Activated CD4-positive, alpha-beta memory T cell treated with anti-CD3 and anti-CD28 coated beads for 36 hours (primary cell): ENCODE measurements at regions of chrX and their contacts with region 1.

Region 1: GRCh38 chrX:52261463-52262194 is 76.9 kb downstream of the MAGED4 start:
- DNase-seq: peak; percentile 90
- H3K4me3 Mint-ChIP-seq: peak overlapping the region; percentile 93
- H3K27ac Mint-ChIP-seq: peak overlapping the region; percentile 99
- H3K4me1 Mint-ChIP-seq: peaks cover 13% of the 10 kb centered on the region
- H3K27me3 Mint-ChIP-seq: peaks cover 6% of the 10 kb centered on the region

Region 2: GRCh38 chrX:51614353-51615012 is 647.1 kb before region 1 on chrX:
- CTCF ChIA-PET with region 1: interaction called, 5 read pairs
- POLR2A ChIA-PET with region 1: no interaction called
- intact Hi-C with region 1: loop called (anchors 10 kb)
- DNase-seq: no peak
- H3K4me3 Mint-ChIP-seq: no peak overlapping the region
- H3K27ac Mint-ChIP-seq: no peak overlapping the region
- H3K4me1 Mint-ChIP-seq: peaks cover 5% of the 10 kb centered on the region
- H3K27me3 Mint-ChIP-seq: peaks cover 32% of the 10 kb centered on the region

Region 3: DNA sequence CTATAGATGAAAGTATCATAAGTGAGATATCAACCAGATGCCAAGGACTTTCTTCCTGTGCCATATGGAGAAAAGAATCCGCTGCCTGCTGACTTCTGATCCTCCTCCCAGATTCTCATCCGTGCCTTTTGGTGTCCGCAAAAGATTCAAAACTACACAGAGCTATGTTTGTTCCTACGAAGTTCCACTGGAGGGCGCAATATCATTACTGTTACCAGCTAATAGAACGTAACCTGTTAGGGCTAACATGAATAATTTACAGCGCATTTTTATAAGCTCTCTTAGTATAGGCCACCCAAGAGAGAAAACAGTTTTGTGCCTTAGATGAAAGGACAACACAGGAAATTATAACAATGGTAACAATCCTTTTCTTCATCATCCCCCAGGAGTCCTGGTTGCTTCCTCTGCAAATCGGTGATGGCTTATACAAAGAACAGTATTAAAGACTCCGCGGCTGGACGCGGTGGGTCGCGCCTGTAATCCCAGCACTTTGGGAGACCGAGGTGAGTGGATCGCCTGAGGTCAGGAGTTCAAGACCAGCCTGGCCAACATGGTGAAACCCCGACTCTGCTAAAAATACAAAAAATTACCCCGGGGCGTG is 620.1 kb before region 1 on chrX:
- CTCF ChIA-PET with region 1: interaction called, 4 read pairs
- POLR2A ChIA-PET with region 1: no interaction called
- intact Hi-C with region 1: loop called (anchors 2 kb)
- DNase-seq: peak; percentile 8
- H3K4me3 Mint-ChIP-seq: no peak overlapping the region
- H3K27ac Mint-ChIP-seq: no peak overlapping the region
- H3K4me1 Mint-ChIP-seq: no peaks in the 10 kb centered on the region
- H3K27me3 Mint-ChIP-seq: peaks cover 8% of the 10 kb centered on the region

Region 4: GRCh38 chrX:51892921-51893745 is 368.5 kb before region 1 on chrX and contains the start of gene MAGED1:
- CTCF ChIA-PET with region 1: no interaction called
- POLR2A ChIA-PET with region 1: no interaction called
- intact Hi-C with region 1: loop called (anchors 5 kb)
- DNase-seq: peak; percentile 89
- H3K4me3 Mint-ChIP-seq: peak within 1 kb of the TSS; percentile 91
- H3K27ac Mint-ChIP-seq: peak within 1 kb of the TSS; percentile 77
- H3K4me1 Mint-ChIP-seq: peaks cover 7% of the 10 kb centered on the region
- H3K27me3 Mint-ChIP-seq: no peaks in the 10 kb centered on the region
- total RNA-seq, gene MAGED1: 42.7 to 43.1 TPM

Region 5: DNA sequence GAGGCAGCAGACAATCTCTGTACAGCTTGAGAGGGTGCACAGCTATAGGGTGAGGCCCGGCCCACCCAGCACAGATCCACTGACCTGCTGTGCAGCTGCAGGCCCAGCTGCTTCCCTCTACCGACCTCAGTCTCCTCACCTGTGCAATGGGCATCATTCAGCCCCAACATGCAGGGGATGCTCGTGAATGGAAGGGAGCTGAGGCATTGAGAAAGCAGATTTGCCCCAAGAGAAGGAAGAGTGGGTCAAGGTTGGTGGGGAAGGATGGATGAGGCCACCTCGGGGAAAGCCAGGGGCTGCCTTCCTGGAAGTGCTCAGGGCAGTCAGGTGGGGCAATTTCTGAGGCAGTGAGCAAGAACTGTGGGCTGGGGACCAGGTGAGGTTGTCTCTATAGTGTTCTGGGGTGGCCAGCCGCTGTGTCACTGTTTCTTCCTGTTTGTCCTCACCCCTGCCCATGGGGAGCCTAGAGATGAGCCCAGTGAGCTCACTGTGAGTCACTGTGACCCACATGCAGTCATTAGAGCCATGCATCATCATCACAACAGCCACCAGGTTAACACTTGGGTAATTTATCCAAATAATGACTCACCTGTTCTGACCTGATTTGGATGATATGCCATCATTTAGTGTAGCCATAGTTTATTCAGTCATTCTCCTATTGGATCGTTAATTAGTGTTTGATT is 85.0 kb after region 1 on chrX:
- CTCF ChIA-PET with region 1: no interaction called
- POLR2A ChIA-PET with region 1: no interaction called
- intact Hi-C with region 1: no loop called
- DNase-seq: peak; percentile 57
- H3K4me3 Mint-ChIP-seq: no peak overlapping the region
- H3K27ac Mint-ChIP-seq: no peak overlapping the region
- H3K4me1 Mint-ChIP-seq: no peaks in the 10 kb centered on the region
- H3K27me3 Mint-ChIP-seq: no peaks in the 10 kb centered on the region

Region 6: DNA sequence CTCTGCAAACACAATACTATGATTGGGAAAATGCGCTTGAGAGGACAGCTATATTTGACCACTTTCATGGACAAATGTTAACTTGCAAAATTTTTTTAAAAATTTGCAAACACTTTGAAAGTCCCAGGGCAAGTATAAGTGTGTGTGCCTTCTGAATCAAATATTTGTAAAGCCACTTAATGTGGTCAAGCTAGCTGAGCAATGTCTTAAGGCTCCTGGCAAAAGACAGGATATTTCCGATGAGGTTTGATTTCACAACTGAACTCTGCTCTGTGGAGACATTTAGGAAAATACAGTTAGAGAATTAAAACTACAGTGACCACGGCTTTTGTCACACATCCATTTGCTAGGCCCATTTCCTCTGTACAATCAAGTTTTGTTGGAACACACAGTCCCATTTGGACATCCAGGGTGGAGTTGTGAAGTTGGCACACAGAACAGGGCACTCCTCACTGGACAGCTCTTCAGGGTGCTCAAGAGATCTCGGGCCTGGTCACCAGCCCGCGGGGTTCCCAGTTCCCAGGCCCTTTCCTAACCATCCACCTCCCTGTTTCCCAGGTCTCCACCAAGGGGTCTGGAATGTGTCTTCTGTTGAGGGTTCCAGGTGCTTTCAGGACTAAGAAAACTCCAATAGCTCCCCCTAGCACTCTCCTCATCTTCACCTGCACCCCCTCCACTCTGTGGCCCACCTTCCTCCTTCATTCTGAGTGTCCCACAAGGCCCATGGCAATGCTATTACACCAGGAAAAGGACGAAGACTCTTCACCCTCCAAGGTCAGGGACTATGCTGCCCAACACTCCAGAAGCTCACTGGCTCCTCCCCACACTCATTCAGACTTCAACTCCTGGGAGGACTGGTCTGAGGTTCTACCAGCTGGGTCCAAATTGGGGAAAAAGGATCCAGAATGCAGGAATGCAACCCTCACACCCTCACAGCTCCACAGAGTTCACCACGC is 149.1 kb after region 1 on chrX:
- CTCF ChIA-PET with region 1: no interaction called
- POLR2A ChIA-PET with region 1: no interaction called
- intact Hi-C with region 1: no loop called
- DNase-seq: no peak
- H3K4me3 Mint-ChIP-seq: no peak overlapping the region
- H3K27ac Mint-ChIP-seq: no peak overlapping the region
- H3K4me1 Mint-ChIP-seq: no peaks in the 10 kb centered on the region
- H3K27me3 Mint-ChIP-seq: no peaks in the 10 kb centered on the region

Region 7: DNA sequence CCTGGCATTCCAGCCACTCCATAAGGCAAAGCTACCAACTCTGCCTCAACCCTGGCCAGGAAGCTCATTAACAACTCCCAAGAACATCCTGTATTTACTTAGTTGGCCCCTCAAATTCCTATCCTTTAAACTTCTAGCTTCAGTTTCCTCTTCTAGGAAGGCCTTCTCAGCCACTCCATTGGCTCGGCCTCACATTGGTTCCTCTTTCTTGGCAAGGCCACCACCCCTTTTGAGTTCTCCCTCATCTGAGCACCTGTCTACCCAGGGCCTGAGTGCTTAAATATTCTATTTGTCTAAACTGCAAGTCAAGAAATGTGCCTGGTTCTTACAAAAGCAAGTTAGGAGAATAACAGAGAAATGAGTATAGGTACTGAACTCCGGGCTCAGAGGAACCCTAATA is 1150.8 kb after region 1 on chrX:
- CTCF ChIA-PET with region 1: no interaction called
- POLR2A ChIA-PET with region 1: no interaction called
- intact Hi-C with region 1: no loop called
- DNase-seq: no peak
- H3K4me3 Mint-ChIP-seq: no peak overlapping the region
- H3K27ac Mint-ChIP-seq: no peak overlapping the region
- H3K4me1 Mint-ChIP-seq: peaks cover under 1% of the 10 kb centered on the region
- H3K27me3 Mint-ChIP-seq: no peaks in the 10 kb centered on the region